ENCODE measurements at regions of chr17 and their contacts with region 1.

Region 1: DNA sequence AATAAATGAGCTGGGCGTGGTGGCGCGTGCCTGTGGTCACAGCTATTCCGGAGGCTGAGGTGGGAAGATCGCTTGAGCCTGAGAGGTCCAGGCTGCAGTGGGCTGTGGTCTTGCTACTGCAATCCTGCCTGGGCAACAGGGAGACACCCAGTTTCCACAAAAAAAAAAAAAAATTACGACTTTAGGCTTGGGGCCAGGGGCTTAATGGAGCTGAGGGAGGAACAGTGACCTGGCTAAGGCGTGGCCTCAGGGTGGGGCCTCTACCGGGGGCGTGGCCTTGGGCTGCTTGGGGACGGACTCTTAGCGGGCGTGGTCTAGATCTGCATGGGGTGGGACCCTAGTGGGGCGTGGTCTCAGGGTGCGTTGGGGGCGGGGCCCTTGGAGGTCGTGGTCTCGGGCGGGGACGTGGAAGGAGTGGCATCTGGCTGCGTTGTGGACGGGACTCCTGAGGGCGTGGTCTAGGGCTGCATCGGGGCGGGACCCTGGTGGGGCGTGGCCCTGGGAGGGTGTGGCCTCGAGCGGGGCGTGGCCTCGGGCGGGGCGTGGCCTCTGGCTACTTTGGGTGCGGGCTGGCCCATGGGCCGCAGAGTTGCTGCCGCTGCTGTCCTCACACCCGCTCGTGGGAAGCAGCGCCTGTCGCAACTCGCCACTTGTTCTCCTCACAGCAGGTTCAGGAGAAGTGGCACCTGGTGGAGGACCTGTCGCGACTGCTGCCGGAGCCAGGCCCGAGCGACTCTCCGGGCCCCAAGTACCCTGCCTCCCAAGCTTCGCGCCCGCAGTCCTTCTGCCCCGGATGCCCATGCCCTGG is 5.8 kb upstream of the C17orf99 start:
- DNase-seq: peak; percentile 100
- ATAC-seq: peak; percentile 94
- H3K4me3 Mint-ChIP-seq: peak overlapping the region; percentile 43
- H3K27ac Mint-ChIP-seq: peak overlapping the region; percentile 72; the same call in 1 of the 2 replicates
- H3K4me1 Mint-ChIP-seq: peaks cover 19% of the 10 kb centered on the region
- H3K27me3 Mint-ChIP-seq: 0 out of 2 replicates have a peak, but pooled peaks cover 3% of the 10 kb centered on the region
- CTCF ChIP-seq: no peak

Region 2: DNA sequence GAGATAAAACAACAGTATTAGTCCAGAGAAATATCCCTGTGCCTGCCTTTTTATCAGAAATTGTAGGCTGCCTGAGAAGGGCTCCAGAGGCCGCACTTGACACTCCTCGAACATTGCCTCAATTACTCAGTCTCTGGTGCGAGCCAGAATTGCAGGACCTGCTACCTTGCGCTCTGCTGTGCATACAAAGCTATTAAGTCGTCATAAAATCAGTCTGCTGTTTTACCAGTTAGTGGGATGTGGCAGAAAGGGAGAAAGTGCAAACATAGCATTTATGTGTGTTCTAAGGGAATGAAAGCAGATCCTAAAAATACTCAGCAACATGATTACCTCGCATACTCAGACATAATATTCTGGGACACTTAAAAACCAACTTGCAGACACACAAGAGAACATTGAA is 82.4 kb before region 1 on chr17:
- CTCF ChIA-PET with region 1: no interaction called
- POLR2A ChIA-PET with region 1: no interaction called
- DNase-seq: no peak
- ATAC-seq: no peak
- H3K4me3 Mint-ChIP-seq: no peak overlapping the region
- H3K27ac Mint-ChIP-seq: 0 out of 2 replicates have a peak overlapping the region, but pooled peaks have one; percentile 3
- H3K4me1 Mint-ChIP-seq: no peaks in the 10 kb centered on the region
- H3K27me3 Mint-ChIP-seq: no peaks in the 10 kb centered on the region
- CTCF ChIP-seq: no peak

Region 3: DNA sequence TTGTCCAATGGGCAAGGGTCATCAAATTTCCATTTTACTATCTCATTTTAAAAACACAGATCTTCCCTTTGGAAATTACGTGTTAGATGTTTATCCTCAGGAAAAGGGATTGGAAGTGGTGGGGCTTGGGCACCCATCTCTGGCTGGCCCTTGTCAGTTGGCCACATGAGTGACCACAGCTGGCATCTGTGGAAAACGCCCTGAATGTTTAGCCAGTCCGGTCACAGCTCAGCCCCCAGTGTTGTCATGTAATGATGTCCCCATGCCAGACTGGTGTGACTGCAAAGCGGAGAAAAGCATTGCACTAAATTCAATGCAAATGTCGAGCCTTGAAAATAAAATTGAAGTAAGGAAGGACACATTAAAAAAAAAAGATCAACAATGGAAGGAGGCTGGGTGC is 64.8 kb before region 1 on chr17:
- CTCF ChIA-PET with region 1: no interaction called
- POLR2A ChIA-PET with region 1: no interaction called
- DNase-seq: no peak
- ATAC-seq: no peak
- H3K4me3 Mint-ChIP-seq: no peak overlapping the region
- H3K27ac Mint-ChIP-seq: no peak overlapping the region
- H3K4me1 Mint-ChIP-seq: no peaks in the 10 kb centered on the region
- H3K27me3 Mint-ChIP-seq: no peaks in the 10 kb centered on the region
- CTCF ChIP-seq: no peak

Region 4: GRCh38 chr17:78128551-78129350 is 11.6 kb before region 1 on chr17 and contains the start of gene TMC6:
- CTCF ChIA-PET with region 1: interaction called, 65 read pairs
- POLR2A ChIA-PET with region 1: interaction called, 6 read pairs
- DNase-seq: peak; percentile 82
- ATAC-seq: peak; percentile 70
- H3K4me3 Mint-ChIP-seq: peak within 1 kb of the TSS; percentile 80
- H3K27ac Mint-ChIP-seq: no peak within 1 kb of the TSS
- H3K4me1 Mint-ChIP-seq: peaks cover 31% of the 10 kb centered on the region
- H3K27me3 Mint-ChIP-seq: peaks cover 13% of the 10 kb centered on the region
- CTCF ChIP-seq: no peak
- total RNA-seq, gene TMC6: 90.9 to 120 TPM (median 93.2 TPM) in 3 replicates

Region 5: GRCh38 chr17:78168242-78168902 is 28.0 kb after region 1 on chr17 and contains the start of gene SYNGR2:
- CTCF ChIA-PET with region 1: interaction called, 82 read pairs
- POLR2A ChIA-PET with region 1: interaction called, 4 read pairs
- DNase-seq: peak; percentile 91
- ATAC-seq: peak; percentile 62
- H3K4me3 Mint-ChIP-seq: peak within 1 kb of the TSS; percentile 70
- H3K27ac Mint-ChIP-seq: no peak within 1 kb of the TSS
- H3K4me1 Mint-ChIP-seq: peaks cover 36% of the 10 kb centered on the region
- H3K27me3 Mint-ChIP-seq: no peaks in the 10 kb centered on the region
- CTCF ChIP-seq: no peak
- total RNA-seq, gene SYNGR2: 47.7 to 50.3 TPM (median 50.2 TPM) in 3 replicates

Region 6: DNA sequence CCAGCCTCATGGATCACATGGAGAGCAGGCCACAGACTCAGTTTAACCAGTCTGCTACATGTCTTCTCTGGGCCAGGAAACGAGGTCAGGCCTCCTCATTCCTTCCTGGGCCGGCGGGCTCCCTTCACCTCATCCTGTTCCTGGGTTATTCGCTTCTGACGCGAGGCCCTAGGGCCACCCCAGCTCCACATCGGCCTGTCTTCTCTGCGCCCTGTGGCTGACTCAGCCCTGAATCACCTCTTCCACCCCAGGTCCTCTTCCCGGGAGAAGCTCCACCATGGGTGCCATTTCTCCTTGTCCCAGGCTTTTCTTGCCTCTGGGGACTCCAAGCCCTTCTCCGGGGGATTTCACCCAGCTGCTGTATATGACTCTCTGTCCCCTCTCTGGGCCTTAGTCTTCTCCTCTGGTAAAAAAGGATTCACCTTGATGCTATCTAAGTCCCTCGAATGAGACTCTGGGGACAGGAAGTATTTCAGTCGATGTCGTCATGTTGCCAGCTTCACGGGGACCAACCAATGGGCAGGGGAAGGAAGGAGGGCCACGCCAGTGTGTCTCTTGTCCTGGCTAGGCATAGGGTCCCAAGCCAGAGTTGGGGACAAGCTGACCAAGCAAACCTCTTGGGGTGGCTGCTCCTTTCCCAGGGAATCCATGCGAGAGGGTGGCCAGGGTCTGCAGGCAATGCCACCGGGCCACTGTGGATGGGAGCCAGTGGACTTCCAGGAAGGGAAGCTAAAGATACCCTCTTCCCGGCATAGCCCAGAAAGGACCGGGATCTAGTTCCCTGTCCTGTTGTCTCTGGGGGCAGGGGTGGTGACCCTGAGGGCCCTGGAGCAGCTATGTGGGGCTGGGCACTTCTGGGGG is 160.8 kb after region 1 on chr17:
- CTCF ChIA-PET with region 1: no interaction called
- POLR2A ChIA-PET with region 1: no interaction called
- DNase-seq: no peak
- ATAC-seq: no peak
- H3K4me3 Mint-ChIP-seq: no peak overlapping the region
- H3K27ac Mint-ChIP-seq: no peak overlapping the region
- H3K4me1 Mint-ChIP-seq: 0 out of 2 replicates have a peak, but pooled peaks cover 4% of the 10 kb centered on the region
- H3K27me3 Mint-ChIP-seq: no peaks in the 10 kb centered on the region
- CTCF ChIP-seq: no peak

Region 7: DNA sequence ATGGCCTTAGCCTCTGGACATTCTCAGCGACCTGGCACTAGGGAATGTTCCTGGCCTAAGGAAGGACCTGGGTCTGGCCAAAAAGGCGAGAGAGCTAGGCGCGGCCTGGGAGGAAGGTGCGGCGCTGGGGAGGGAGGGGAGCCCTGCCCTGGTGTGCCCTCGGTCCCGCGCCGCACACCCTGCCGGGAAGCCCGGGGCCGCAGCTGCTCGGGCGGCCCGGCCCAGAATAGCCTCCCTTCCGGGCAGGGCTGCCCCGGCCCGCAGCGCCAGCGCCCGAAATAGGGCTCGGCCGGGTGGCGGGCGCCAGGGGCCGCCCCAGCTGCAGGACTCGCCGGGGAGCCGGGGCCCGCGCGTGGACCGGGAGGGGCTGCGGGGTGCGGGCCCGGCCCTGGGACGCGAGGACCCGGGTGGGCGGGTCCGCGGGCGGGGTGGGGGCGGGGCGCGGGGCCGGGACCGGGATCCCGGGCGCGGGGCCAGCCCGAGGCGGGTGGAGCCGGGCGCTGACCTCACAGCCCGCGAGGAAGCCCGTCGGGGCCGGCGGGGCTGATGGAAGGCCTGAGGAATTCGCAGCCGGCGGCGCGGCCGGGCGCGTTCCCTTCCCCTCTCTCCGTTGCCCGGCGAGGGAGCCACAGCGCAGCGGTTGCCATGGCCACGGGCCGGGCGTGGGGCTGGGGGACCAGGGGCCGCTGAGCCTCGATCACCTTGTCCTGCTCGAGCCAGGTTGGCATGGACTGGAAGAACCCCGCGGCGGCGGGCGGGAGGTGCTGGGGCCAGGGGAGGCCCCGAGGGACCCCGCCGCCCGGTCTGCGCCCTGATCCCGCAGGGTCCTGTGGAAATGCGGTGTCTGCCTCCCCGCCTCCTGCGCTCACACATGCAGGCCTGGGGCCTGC is 201.4 kb after region 1 on chr17:
- CTCF ChIA-PET with region 1: no interaction called
- POLR2A ChIA-PET with region 1: no interaction called
- DNase-seq: peak; percentile 75
- ATAC-seq: peak; percentile 57
- H3K4me3 Mint-ChIP-seq: peak overlapping the region; percentile 56
- H3K27ac Mint-ChIP-seq: no peak overlapping the region
- H3K4me1 Mint-ChIP-seq: peaks cover 25% of the 10 kb centered on the region
- H3K27me3 Mint-ChIP-seq: peaks cover 19% of the 10 kb centered on the region
- CTCF ChIP-seq: no peak